Endothelial cell of umbilical vein (primary cell): ENCODE measurements at regions of chr12 and their contacts with region 1.

Region 1: GRCh38 chr12:132506328-132507160 is 16.6 kb downstream of the FBRSL1 start:
- DNase-seq: peak; percentile 85
- H3K4me3 ChIP-seq: no peak overlapping the region
- H3K27ac ChIP-seq: peak overlapping the region; percentile 48
- H3K4me1 ChIP-seq: peaks cover 16% of the 10 kb centered on the region
- H3K27me3 ChIP-seq: peaks cover 0 to 10% of the 10 kb centered on the region in 2 experiments
- CTCF ChIP-seq: no peak
- POLR2A ChIP-seq: no peak

Region 2: GRCh38 chr12:131699434-131699833 is 807.1 kb before region 1 on chr12:
- CTCF ChIA-PET with region 1: no interaction called
- POLR2A ChIA-PET with region 1: no interaction called
- dilution Hi-C with region 1: no loop called
- intact Hi-C with region 1: no loop called
- DNase-seq: no peak
- H3K4me3 ChIP-seq: no peak overlapping the region
- H3K27ac ChIP-seq: no peak overlapping the region
- H3K4me1 ChIP-seq: no peaks in the 10 kb centered on the region
- H3K27me3 ChIP-seq: no peaks in the 10 kb centered on the region
- CTCF ChIP-seq: no peak
- POLR2A ChIP-seq: no peak

Region 3: GRCh38 chr12:132489602-132490239 is 16.8 kb before region 1 on chr12 and contains the start of gene FBRSL1:
- CTCF ChIA-PET with region 1: interaction called, 3 read pairs
- POLR2A ChIA-PET with region 1: no interaction called
- dilution Hi-C with region 1: no loop called
- intact Hi-C with region 1: loop called (anchors 1 kb)
- DNase-seq: peak; percentile 76
- H3K4me3 ChIP-seq: peak within 1 kb of the TSS; percentile 58 to 69 (median 67)
- H3K27ac ChIP-seq: no peak within 1 kb of the TSS
- H3K4me1 ChIP-seq: peaks cover 15% of the 10 kb centered on the region
- H3K27me3 ChIP-seq: no peaks in the 10 kb centered on the region
- CTCF ChIP-seq: no peak
- POLR2A ChIP-seq: no peak
- total RNA-seq, gene FBRSL1: 75.5 and 79.8 TPM in 2 replicates